ENCODE measurements at regions of chr7 and their contacts with region 1.

Region 1: GRCh38 chr7:43729214-43729923 is at the start of gene COA1:
- DNase-seq: peak; percentile 86
- H3K27ac ChIP-seq: peak within 1 kb of the TSS; percentile 89
- CTCF ChIP-seq: no peak

Region 2: GRCh38 chr7:43879477-43879876 is 150.1 kb after region 1 on chr7:
- CTCF ChIA-PET with region 1: no interaction called
- POLR2A ChIA-PET with region 1: no interaction called
- DNase-seq: no peak
- H3K27ac ChIP-seq: peak overlapping the region; percentile 7; the same call in 1 of the 2 replicates
- CTCF ChIP-seq: no peak

Region 3: GRCh38 chr7:44200647-44201461 is 471.5 kb after region 1 on chr7 and contains the start of gene YKT6:
- CTCF ChIA-PET with region 1: interaction called, 10 read pairs
- POLR2A ChIA-PET with region 1: no interaction called
- DNase-seq: peak; percentile 99
- H3K27ac ChIP-seq: peak within 1 kb of the TSS; percentile 74
- CTCF ChIP-seq: peak; percentile 69